ENCODE measurements at regions of chr1 and their contacts with region 1.

Region 1: GRCh38 chr1:1890506-1891348 is at the start of gene GNB1:
- DNase-seq: peak; percentile 79
- H3K4me3 Mint-ChIP-seq: peak within 1 kb of the TSS; percentile 81
- H3K27ac Mint-ChIP-seq: peak within 1 kb of the TSS; percentile 86
- H3K4me1 Mint-ChIP-seq: peaks cover 56% of the 10 kb centered on the region
- H3K27me3 Mint-ChIP-seq: peaks cover under 1% of the 10 kb centered on the region
- total RNA-seq, gene GNB1: 326 to 351 TPM

Region 2: GRCh38 chr1:869499-870244 is 1021.1 kb before region 1 on chr1:
- CTCF ChIA-PET with region 1: no interaction called
- intact Hi-C with region 1: no loop called
- DNase-seq: peak; percentile 71
- H3K4me3 Mint-ChIP-seq: no peak overlapping the region
- H3K27ac Mint-ChIP-seq: no peak overlapping the region
- H3K4me1 Mint-ChIP-seq: peaks cover 3% of the 10 kb centered on the region
- H3K27me3 Mint-ChIP-seq: peaks cover 11% of the 10 kb centered on the region

Region 3: DNA sequence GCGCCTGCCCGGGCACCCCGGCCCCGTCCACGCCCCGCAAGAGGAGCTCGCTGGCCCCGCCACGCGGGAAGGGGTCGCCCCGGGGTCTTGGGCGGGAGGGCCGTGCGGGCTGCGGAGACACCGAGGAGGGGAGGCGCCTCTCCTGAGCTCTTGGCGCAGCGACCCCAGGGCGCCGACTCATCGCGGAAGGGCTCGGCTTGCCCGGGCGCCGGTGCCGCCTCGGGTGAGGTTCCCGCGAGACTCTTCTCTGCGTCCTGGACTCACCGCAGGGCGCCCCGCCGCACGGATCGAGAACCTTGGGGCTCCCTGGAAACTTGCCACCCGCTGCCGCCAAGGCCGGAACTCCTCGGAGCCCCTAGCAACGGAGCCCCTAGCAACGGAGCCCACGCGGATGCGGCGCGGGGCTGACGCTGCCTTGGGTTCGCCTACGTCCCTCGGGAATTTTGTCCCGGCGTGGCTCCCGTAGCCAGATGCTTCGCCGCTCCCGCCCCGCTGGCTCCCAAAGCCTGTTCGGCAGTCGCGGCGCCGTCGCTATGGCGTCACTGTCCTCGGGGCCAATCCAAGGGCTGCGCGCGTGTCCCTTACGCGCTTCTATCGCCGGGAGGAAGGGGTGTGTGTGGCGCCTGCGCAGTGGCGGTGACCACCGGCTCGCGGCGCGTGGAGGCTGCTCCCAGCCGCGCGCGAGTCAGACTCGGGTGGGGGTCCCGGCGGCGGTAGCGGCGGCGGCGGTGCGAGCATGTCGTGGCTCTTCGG is 379.0 kb before region 1 on chr1 and contains the start of gene ATAD3A:
- CTCF ChIA-PET with region 1: no interaction called
- intact Hi-C with region 1: loop called (anchors 5 kb)
- DNase-seq: peak; percentile 99
- H3K4me3 Mint-ChIP-seq: peak within 1 kb of the TSS; percentile 80
- H3K27ac Mint-ChIP-seq: peak within 1 kb of the TSS; percentile 73
- H3K4me1 Mint-ChIP-seq: peaks cover 10% of the 10 kb centered on the region
- H3K27me3 Mint-ChIP-seq: no peaks in the 10 kb centered on the region
- total RNA-seq, gene ATAD3A: 39.4 to 41.0 TPM

Region 4: GRCh38 chr1:1777950-1778662 is 112.6 kb before region 1 on chr1 and contains the start of gene NADK:
- CTCF ChIA-PET with region 1: interaction called, 3 read pairs
- intact Hi-C with region 1: loop called (anchors 1 kb)
- DNase-seq: peak; percentile 52
- H3K4me3 Mint-ChIP-seq: peak within 1 kb of the TSS; percentile 82
- H3K27ac Mint-ChIP-seq: peak within 1 kb of the TSS; percentile 81
- H3K4me1 Mint-ChIP-seq: peaks cover 62% of the 10 kb centered on the region
- H3K27me3 Mint-ChIP-seq: no peaks in the 10 kb centered on the region
- total RNA-seq, gene NADK: 42.1 to 43.6 TPM

Region 5: DNA sequence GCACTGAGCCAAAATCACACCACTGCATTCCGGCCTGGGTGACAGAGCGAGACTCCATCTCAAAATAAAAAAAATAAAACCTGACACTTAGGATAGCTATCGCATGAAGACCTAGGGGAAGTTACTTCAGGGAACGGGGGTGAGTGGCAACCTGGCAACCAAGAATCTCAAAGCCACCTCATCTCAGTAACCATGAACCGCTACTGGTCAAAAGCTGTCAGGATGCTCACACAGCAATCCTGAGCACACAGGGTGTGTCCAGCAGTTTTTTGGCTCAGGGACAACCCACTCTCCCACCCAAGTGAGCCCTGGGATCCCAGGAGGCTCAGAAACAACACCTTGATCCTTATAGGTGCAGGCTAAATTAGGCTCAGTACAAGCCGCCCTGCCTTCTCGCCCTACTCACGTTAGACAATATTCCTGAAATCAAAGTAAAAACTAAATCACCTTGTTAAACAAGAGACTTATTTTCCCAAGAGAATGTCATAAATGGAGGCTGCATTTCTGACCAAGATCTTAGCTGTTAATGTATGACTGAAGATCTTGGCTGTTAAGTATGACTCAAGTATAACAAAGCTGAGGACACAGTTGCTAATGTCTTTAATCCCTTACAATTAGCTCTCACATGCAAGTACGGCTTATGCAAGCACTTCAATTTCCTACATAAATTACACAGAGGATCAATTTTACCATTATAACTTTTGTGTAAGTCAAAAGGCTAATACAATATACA is 64.2 kb before region 1 on chr1:
- CTCF ChIA-PET with region 1: no interaction called
- intact Hi-C with region 1: loop called (anchors 5 kb)
- DNase-seq: no peak
- H3K4me3 Mint-ChIP-seq: no peak overlapping the region
- H3K27ac Mint-ChIP-seq: peak overlapping the region; percentile 24
- H3K4me1 Mint-ChIP-seq: peaks cover 37% of the 10 kb centered on the region
- H3K27me3 Mint-ChIP-seq: no peaks in the 10 kb centered on the region

Region 6: DNA sequence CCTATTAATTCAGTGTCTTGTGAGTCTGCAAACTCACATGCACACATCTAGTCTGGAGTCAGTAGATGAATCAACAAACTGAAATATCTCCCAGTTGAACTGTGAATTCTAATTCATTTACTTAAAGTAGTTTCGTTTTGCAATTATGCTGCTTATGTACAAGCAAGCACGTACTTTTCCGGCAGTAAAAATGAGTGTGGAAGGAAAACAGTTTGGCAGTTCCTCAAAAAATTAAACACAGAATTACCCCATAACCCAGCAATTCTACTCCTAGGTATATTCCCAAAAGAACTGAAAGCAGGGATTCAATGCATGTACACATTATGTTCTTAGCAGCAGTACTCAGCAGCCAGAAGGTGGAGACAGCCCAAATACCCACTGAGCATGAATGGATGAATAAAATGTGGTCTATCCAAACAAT is 49.1 kb before region 1 on chr1:
- CTCF ChIA-PET with region 1: no interaction called
- intact Hi-C with region 1: loop called (anchors 5 kb)
- DNase-seq: no peak
- H3K4me3 Mint-ChIP-seq: peak overlapping the region; percentile 28
- H3K27ac Mint-ChIP-seq: peak overlapping the region; percentile 68
- H3K4me1 Mint-ChIP-seq: peaks cover 49% of the 10 kb centered on the region
- H3K27me3 Mint-ChIP-seq: no peaks in the 10 kb centered on the region

Region 7: GRCh38 chr1:1906185-1907097 is 15.7 kb after region 1 on chr1:
- CTCF ChIA-PET with region 1: interaction called, 8 read pairs
- intact Hi-C with region 1: loop called (anchors 1 kb)
- DNase-seq: peak; percentile 81
- H3K4me3 Mint-ChIP-seq: peak overlapping the region; percentile 5
- H3K27ac Mint-ChIP-seq: peak overlapping the region; percentile 11
- H3K4me1 Mint-ChIP-seq: peaks cover 16% of the 10 kb centered on the region
- H3K27me3 Mint-ChIP-seq: no peaks in the 10 kb centered on the region

Region 8: DNA sequence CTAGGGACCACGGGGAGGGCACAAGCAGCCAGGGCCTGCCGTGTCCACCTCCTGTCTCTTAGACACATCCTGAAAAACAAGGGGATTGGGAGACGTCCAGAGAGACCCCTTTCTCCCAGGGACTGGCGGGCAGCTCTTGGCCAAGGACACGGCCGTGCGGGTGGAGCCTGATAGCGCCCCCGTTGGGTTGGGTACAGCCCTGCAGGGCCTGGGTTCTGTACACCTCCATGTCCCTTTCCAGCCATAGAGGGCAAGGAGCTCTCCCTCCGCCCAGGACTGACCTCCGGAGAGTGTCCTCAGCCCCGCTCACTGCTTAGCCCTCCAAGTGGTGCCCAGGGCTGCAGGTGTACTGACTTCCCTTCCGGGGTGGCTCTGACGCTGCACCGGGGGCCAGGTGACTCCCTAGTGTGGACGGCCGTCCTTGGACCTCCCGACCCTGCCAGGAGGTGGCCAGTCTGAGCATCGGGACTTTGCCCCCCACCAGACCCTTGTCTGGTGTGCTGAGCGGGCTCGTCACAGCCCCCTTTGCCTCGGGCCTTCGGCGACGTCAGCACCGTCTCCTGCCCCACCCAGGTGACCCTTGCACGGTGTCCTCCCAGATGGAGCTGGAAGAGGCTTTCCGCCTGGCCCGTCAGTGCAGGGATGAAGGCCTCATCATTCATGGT is 165.3 kb after region 1 on chr1:
- CTCF ChIA-PET with region 1: no interaction called
- intact Hi-C with region 1: no loop called
- DNase-seq: no peak
- H3K4me3 Mint-ChIP-seq: no peak overlapping the region
- H3K27ac Mint-ChIP-seq: no peak overlapping the region
- H3K4me1 Mint-ChIP-seq: no peaks in the 10 kb centered on the region
- H3K27me3 Mint-ChIP-seq: no peaks in the 10 kb centered on the region

Region 9: DNA sequence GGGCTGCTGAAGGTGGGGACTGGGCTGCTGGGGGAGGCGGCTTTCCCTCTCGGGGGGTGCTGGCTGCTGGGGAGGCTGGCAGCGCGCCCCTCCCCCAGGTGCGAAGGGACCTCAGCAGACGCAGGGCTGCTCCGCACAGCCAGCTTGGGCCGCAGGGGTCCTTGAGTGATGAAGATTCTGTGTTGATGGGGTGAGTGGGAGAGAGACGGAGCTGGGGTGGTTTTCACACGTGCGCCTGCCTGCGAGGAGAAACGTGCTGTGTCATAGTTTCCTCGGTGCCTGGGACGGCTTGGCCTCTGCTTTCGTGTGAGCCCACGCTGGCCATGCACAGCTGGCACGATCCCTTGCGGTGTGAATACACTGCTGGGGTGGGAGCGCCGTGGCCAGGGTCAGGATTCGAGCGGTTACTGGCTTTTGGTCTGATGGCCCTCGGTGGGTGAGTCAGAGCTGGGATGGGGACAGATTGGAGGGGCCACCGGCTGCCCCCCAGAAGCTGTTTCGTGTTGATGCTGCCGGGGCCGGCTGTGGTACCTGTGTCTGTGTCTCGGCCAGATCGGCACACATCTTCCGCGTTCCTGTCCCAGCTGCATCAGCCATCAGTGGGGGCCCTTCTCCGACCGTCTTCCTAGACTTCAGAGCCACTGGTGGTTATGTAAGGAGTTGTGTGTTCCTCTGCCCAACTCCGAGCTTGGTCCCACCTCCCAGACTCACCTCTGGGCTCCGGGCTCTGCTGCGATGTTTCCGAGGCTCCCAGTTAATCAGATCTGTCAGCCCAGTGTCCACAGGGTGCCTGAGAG is 184.4 kb after region 1 on chr1:
- CTCF ChIA-PET with region 1: no interaction called
- intact Hi-C with region 1: no loop called
- DNase-seq: no peak
- H3K4me3 Mint-ChIP-seq: no peak overlapping the region
- H3K27ac Mint-ChIP-seq: no peak overlapping the region
- H3K4me1 Mint-ChIP-seq: peaks cover 3% of the 10 kb centered on the region
- H3K27me3 Mint-ChIP-seq: no peaks in the 10 kb centered on the region

Measured in activated naive CD4-positive, alpha-beta T cell treated with anti-CD3 and anti-CD28 coated beads for 36 hours (primary cell).